ENCODE measurements at regions of chr22 and their contacts with region 1.

Region 1: DNA sequence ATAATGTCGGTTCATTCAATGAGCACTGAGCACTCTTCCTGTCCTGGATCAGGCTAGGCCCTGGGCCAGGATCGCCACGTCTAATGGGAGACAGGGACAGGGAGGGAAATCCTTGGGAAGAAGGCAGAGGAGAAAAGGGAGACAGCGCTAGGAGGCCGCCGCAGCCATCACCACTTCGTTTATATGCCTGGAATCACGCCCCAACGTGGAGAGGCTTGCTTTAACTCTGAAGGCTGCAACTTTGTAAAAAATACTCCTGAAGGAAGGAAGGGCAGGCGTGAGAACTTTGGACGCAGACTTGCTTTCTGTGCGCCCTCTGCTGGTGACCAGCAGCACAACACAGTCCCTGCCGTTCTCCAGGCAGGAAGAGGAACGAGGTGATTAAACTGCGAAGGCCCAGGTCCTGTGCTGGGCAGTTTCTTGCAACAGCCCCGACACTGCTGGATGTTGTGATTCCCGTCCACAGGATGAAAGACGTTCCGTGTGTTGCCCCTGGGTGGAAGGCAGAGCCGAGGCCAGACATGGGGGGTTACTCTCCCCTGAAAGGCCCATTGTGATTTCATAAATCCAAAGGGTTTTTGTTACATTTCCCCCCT is 22.1 kb downstream of the RIBC2 start:
- DNase-seq: peak; percentile 67
- H3K4me3 Mint-ChIP-seq: no peak overlapping the region
- H3K27ac Mint-ChIP-seq: no peak overlapping the region
- H3K4me1 Mint-ChIP-seq: peaks cover 9% of the 10 kb centered on the region
- H3K27me3 Mint-ChIP-seq: no peaks in the 10 kb centered on the region

Region 2: DNA sequence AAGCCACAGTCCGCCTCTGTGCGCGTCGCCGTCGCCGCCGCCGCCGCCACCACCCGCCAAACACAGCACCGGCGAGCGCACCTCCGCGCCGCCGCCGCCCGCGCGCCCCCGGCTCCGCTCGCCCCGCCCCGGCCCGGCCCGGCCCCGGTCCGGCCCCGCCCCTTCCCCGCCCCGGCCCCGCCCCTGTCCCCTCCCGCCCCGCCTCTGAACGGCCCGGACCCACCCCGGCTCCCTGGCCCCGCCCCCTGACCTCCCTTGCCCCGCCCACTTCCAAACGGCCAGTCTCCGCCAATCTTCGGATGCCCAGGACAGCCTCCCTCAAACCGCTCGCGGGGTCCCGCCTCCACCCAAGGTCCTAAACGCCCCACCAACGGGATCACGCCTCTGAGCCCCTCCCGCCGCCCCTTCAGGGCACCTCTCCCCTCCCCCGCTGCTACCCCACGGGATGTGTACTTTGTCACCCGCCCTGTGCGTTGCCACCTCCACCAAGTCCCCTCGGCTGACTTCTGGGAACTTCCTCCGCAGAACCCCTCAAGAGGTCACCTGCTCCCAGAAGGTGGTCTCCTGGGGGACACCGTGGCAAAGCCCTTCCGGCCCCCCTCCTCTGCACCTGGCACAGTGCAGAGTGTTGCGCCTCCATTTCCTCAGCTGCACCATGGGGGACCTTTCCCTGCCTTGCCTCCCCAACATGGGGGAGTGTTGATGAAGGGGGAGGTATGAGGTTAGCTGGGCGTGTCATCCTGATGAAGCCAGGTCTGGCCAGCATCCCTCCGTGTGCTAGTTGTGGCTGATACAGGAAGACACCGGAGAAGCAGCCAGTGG is 194.6 kb before region 1 on chr22 and contains the start of gene KIAA0930:
- intact Hi-C with region 1: loop called (anchors 1 kb)
- DNase-seq: peak; percentile 64
- H3K4me3 Mint-ChIP-seq: peak within 1 kb of the TSS; percentile 90
- H3K27ac Mint-ChIP-seq: peak within 1 kb of the TSS; percentile 84
- H3K4me1 Mint-ChIP-seq: peaks cover 10% of the 10 kb centered on the region
- H3K27me3 Mint-ChIP-seq: no peaks in the 10 kb centered on the region
- total RNA-seq, gene KIAA0930: 39.5 and 45.2 TPM in 2 replicates

Region 3: DNA sequence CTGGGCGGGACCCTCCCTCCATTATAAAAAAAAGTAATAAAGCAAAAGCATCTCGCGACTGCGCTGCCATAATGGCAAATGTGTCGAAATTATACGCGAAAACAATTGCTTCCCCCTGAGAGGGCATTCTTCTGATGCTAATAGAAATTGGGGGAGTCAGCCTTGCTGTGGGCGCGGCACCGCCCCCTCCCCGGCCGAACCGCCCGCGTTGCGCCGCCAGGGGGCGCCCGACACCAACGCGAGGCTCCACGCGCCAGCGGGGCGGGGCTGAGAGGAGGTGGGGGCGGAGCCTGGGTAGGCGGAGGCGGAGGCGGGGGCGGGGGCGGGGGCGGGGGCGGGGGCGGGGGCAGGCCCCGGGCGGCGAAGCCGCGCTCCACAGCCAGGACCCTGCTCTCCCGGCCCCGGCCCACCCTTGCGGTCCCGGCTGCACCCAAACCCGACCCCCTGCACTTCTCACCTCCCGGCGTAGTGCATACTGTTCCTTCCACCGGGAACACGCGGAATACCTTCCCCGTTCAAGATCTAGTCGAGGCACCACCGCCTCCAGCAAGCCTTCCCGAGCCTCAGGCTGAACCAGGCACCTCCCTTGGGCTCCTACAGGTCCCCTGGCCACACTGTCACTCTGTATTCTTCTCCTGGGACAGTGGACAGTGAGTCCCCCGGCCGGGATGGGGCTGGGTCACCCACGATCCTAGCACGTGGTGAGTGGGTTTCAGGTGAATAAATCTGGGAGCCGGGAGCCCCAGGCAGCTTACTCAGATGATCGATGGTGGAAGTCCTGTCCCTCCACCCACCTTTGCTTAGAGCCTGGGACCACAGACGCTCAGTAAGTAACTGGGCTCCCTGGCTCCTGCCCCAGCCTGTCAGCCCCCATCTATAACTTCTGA is 166.4 kb before region 1 on chr22:
- intact Hi-C with region 1: loop called (anchors 1 kb)
- DNase-seq: peak; percentile 80
- H3K4me3 Mint-ChIP-seq: peak overlapping the region; percentile 77
- H3K27ac Mint-ChIP-seq: peak overlapping the region; percentile 64
- H3K4me1 Mint-ChIP-seq: peaks cover 5% of the 10 kb centered on the region
- H3K27me3 Mint-ChIP-seq: peaks cover 24% of the 10 kb centered on the region